Caco-2 (cell line): ENCODE measurements at regions of chr20 and their contacts with region 1.

Region 1: DNA sequence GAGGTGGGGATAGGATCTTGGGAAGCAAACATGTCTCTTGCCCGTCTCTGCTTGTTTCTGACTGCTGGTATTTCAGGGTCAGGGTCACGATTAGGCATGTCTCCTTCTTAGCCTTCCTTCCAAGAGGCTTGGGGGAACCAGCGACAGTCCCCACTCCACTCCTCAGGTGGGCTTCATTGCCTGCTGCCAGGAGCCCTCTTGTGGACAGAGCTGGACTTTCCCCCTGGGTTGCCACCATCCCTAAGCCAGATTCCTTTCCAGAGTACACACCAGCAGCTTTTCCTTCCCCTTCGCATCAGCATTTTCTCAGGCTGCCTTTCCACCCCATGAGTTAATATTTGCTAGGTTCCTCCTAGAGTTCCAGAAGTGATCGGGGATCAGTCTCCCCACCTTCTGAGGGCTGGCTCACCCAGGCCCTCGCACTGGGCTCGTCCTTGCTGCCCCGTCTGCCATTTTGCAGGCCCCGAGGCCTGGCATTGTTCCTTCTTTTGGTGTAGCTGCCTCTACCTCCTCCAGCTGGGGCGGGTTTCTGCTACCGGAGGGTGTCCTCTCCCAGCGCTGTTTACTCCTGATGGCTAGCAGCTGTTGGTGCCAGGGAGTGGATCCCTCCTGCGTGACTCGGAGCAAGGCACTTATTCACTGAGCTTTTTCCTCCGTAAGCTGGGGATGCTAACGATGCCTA is 8.8 kb upstream of the C20orf144 start:
- DNase-seq: peak; percentile 90 to 92
- H3K4me3 ChIP-seq: no peak overlapping the region
- H3K4me3 Mint-ChIP-seq: peak overlapping the region; percentile 24
- H3K27ac Mint-ChIP-seq: peak overlapping the region; percentile 66
- H3K4me1 ChIP-seq: peaks cover 27% of the 10 kb centered on the region
- H3K4me1 Mint-ChIP-seq: peaks cover 25% of the 10 kb centered on the region
- H3K27me3 ChIP-seq: no peaks in the 10 kb centered on the region
- H3K27me3 Mint-ChIP-seq: no peaks in the 10 kb centered on the region
- CTCF ChIP-seq: peak; percentile 99

Region 2: GRCh38 chr20:33401184-33401920 is 252.0 kb before region 1 on chr20 and contains the start of gene CDK5RAP1:
- CTCF ChIA-PET with region 1: interaction called, 6 read pairs
- POLR2A ChIA-PET with region 1: no interaction called
- intact Hi-C with region 1: loop called (anchors 1 kb)
- DNase-seq: peak; percentile 95 to 96
- H3K4me3 ChIP-seq: peak within 1 kb of the TSS; percentile 88
- H3K4me3 Mint-ChIP-seq: peak within 1 kb of the TSS; percentile 91
- H3K27ac Mint-ChIP-seq: peak within 1 kb of the TSS; percentile 76
- H3K4me1 ChIP-seq: peaks cover 18% of the 10 kb centered on the region
- H3K4me1 Mint-ChIP-seq: peaks cover 8% of the 10 kb centered on the region
- H3K27me3 ChIP-seq: no peaks in the 10 kb centered on the region
- H3K27me3 Mint-ChIP-seq: no peaks in the 10 kb centered on the region
- CTCF ChIP-seq: no peak
- total RNA-seq, gene CDK5RAP1: 116 and 120 TPM in 2 replicates

Region 3: DNA sequence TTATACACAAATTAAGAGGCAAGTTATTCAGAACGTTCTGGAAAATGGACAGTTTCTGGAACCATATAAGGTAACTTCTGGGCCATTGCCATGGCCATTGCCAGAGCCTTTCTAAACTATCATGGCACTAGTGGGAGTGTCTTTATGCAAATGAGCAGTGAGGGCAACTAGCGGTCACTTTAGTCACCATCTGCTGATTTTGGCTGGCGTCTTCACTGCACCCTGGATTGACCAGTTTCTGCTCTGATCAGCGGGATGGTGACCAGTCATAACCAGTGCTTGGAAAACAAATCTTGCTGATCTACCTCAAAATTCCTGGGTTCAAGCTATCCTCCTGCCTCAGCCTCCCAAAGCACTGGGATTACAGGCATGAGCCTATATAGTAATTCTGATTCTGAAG is 202.5 kb before region 1 on chr20:
- CTCF ChIA-PET with region 1: interaction called, 10 read pairs
- POLR2A ChIA-PET with region 1: no interaction called
- intact Hi-C with region 1: no loop called
- DNase-seq: no peak
- H3K4me3 ChIP-seq: no peak overlapping the region
- H3K4me3 Mint-ChIP-seq: no peak overlapping the region
- H3K27ac Mint-ChIP-seq: no peak overlapping the region
- H3K4me1 ChIP-seq: no peaks in the 10 kb centered on the region
- H3K4me1 Mint-ChIP-seq: no peaks in the 10 kb centered on the region
- H3K27me3 ChIP-seq: no peaks in the 10 kb centered on the region
- H3K27me3 Mint-ChIP-seq: no peaks in the 10 kb centered on the region
- CTCF ChIP-seq: no peak

Region 4: DNA sequence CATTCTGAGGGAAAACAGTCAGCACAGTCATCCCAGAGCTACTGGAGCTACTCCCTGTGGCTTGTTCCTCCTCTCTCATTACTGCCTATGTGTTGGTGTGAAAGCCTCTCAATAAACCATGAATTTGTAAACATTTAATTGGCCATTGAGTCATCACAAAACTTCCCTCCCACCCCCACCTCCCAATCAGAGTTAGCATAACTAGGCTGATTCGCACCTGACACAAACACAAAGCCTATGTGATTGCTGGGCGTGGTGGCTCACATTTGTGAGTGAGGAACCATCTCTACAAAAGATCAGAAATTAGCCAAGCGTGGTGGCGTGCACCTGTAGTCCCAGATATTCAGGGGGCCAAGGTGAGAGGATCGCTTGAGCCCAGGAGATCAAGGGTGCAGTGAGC is 192.6 kb before region 1 on chr20:
- CTCF ChIA-PET with region 1: interaction called, 72 read pairs
- POLR2A ChIA-PET with region 1: no interaction called
- intact Hi-C with region 1: loop called (anchors 1 kb)
- DNase-seq: no peak
- H3K4me3 ChIP-seq: no peak overlapping the region
- H3K4me3 Mint-ChIP-seq: no peak overlapping the region
- H3K27ac Mint-ChIP-seq: no peak overlapping the region
- H3K4me1 ChIP-seq: no peaks in the 10 kb centered on the region; the same call in 1 of the 2 replicates
- H3K4me1 Mint-ChIP-seq: no peaks in the 10 kb centered on the region
- H3K27me3 ChIP-seq: no peaks in the 10 kb centered on the region
- H3K27me3 Mint-ChIP-seq: no peaks in the 10 kb centered on the region
- CTCF ChIP-seq: no peak

Region 5: DNA sequence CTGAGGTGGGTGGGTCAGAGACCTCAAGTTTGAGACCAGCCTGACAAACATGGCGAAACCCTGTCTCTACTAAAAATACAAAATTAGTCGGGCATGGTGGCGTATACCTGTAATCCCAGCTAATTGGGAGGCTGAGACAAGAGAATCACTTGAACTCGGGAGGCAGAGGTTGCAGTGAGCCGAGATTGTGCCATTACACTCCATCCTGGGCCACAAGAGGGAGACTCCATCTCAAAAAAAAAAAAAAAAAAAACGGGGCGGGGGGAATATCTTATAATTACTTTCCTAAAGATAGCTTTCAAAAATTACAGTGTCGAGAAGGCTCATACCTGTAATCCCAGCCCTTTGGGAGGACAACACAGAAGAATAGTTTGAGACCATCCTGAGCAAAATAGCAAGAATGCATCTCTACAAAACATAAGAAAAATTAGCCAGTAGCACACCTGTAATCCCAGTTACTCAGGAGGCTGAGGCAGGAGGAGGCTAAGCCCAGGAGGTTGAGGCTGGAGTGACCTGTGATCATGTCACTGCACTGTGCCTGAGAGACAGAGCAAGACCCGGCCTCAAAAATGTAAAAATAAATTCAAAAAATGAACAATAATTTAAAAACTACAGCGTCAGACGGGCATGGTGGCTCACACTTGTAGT is 137.7 kb before region 1 on chr20:
- CTCF ChIA-PET with region 1: interaction called, 4 read pairs
- POLR2A ChIA-PET with region 1: no interaction called
- intact Hi-C with region 1: loop called (anchors 1 kb)
- DNase-seq: no peak
- H3K4me3 ChIP-seq: no peak overlapping the region
- H3K4me3 Mint-ChIP-seq: no peak overlapping the region
- H3K27ac Mint-ChIP-seq: no peak overlapping the region
- H3K4me1 ChIP-seq: peaks cover 13% of the 10 kb centered on the region
- H3K4me1 Mint-ChIP-seq: peaks cover 17% of the 10 kb centered on the region
- H3K27me3 ChIP-seq: no peaks in the 10 kb centered on the region
- H3K27me3 Mint-ChIP-seq: no peaks in the 10 kb centered on the region
- CTCF ChIP-seq: peak; percentile 50 to 66

Region 6: DNA sequence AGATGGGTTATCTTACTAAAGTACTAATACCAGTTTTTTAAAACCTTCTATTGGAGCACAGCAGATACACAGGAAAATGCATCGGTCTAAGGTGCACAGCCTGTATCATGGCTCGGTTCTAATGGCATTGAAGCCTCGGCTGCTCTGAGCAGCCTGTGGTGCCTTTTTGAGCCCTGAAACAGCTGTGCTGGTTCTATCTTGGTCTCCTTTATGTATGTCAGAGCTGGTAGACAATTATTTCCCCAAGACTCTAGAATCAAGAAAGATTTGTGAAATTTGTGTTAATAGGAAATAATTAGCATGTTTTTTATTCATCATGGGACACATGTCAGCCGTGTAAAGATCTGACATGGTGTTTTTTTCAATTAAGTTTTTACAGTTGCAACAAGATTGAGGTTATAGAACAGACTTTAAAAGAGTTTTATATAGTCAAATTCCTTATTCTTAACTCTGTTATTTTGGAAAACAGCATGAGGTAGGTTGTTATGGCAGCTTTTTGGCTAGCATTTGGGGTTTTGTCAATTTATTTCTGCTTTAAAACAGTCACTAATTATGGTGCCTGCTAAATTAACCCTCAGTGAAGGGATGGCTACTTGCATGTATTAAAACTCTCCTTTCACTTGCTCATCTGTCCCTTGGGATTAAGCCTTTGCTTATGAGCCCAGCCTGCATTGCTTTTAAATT is 31.5 kb before region 1 on chr20:
- CTCF ChIA-PET with region 1: interaction called, 4 read pairs
- POLR2A ChIA-PET with region 1: no interaction called
- intact Hi-C with region 1: loop called (anchors 2 kb)
- DNase-seq: no peak
- H3K4me3 ChIP-seq: no peak overlapping the region
- H3K4me3 Mint-ChIP-seq: no peak overlapping the region
- H3K27ac Mint-ChIP-seq: no peak overlapping the region
- H3K4me1 ChIP-seq: no peaks in the 10 kb centered on the region
- H3K4me1 Mint-ChIP-seq: no peaks in the 10 kb centered on the region
- H3K27me3 ChIP-seq: no peaks in the 10 kb centered on the region
- H3K27me3 Mint-ChIP-seq: no peaks in the 10 kb centered on the region
- CTCF ChIP-seq: no peak

Region 7: GRCh38 chr20:33753763-33754162 is 100.4 kb after region 1 on chr20:
- CTCF ChIA-PET with region 1: no interaction called
- POLR2A ChIA-PET with region 1: no interaction called
- intact Hi-C with region 1: no loop called
- DNase-seq: no peak
- H3K4me3 ChIP-seq: no peak overlapping the region
- H3K4me3 Mint-ChIP-seq: no peak overlapping the region
- H3K27ac Mint-ChIP-seq: no peak overlapping the region
- H3K4me1 ChIP-seq: no peaks in the 10 kb centered on the region
- H3K4me1 Mint-ChIP-seq: no peaks in the 10 kb centered on the region
- H3K27me3 ChIP-seq: no peaks in the 10 kb centered on the region
- H3K27me3 Mint-ChIP-seq: no peaks in the 10 kb centered on the region
- CTCF ChIP-seq: no peak